GM23248 (cell line): ENCODE measurements at regions of chr2 and their contacts with region 1.

Region 1: GRCh38 chr2:238263204-238264071 is 23.6 kb upstream of the HES6 start:
- DNase-seq: peak; percentile 95
- H3K4me3 ChIP-seq: no peak overlapping the region
- H3K27ac ChIP-seq: peak overlapping the region; percentile 79
- H3K4me1 ChIP-seq: no peaks in the 10 kb centered on the region; the same call in 1 of the 2 replicates
- H3K27me3 ChIP-seq: no peaks in the 10 kb centered on the region

Region 2: GRCh38 chr2:237859533-237860272 is 403.7 kb before region 1 on chr2 and contains the start of gene RAMP1:
- in situ Hi-C with region 1: loop called (anchors 10 kb)
- DNase-seq: peak; percentile 66
- H3K4me3 ChIP-seq: peak within 1 kb of the TSS; percentile 48
- H3K27ac ChIP-seq: no peak within 1 kb of the TSS
- H3K4me1 ChIP-seq: peaks cover 21% of the 10 kb centered on the region
- H3K27me3 ChIP-seq: no peaks in the 10 kb centered on the region
- total RNA-seq, gene RAMP1: 4.1 and 4.8 TPM in 2 replicates

Region 3: DNA sequence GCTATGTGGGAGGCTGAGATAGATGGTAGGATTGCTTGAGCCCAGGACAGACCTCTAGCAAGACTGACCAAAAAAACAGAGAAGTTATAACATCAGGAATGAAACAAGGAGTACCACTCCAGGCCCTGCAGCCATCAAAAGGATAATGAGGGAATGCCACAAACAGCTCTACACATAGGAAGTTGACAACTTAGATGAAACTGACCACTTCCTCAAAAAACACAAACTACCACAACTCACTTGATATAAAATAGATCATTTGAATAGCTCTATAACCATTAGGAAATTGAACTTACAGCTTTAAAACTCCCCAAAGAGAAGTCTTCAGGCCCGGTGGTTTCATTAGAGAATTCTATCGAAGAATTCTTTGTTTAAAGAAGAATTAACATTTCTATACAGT is 176.2 kb before region 1 on chr2:
- in situ Hi-C with region 1: no loop called
- DNase-seq: no peak
- H3K4me3 ChIP-seq: no peak overlapping the region
- H3K27ac ChIP-seq: no peak overlapping the region
- H3K4me1 ChIP-seq: no peaks in the 10 kb centered on the region
- H3K27me3 ChIP-seq: no peaks in the 10 kb centered on the region

Region 4: DNA sequence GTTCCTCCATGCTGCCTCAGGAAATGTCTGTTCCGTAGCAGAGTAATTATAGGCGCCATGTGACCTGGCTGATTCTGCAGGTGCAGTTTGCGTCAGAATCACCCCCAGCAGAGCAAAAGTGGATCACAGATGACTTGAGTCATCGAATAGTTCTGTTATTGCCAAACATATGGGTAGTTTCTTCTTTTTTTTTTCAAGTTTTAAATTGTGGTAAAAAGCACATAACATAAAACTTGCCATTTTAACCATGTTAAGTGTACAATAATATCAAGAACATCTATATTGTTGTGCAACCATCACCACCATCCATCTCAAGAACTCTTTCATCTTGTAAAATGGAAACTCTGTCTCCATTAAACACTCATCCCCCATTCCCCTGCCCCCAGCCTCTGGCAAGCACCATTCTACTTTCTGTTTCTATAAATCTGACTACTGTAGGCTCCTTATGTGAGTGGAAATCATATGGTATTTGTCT is 406.7 kb after region 1 on chr2:
- in situ Hi-C with region 1: no loop called
- DNase-seq: no peak
- H3K4me3 ChIP-seq: no peak overlapping the region
- H3K27ac ChIP-seq: no peak overlapping the region
- H3K4me1 ChIP-seq: peaks cover 10% of the 10 kb centered on the region
- H3K27me3 ChIP-seq: no peaks in the 10 kb centered on the region